Left cardiac atrium (tissue), 4 donors: ENCODE measurements at regions of chr10 and their contacts with region 1.

Region 1: DNA sequence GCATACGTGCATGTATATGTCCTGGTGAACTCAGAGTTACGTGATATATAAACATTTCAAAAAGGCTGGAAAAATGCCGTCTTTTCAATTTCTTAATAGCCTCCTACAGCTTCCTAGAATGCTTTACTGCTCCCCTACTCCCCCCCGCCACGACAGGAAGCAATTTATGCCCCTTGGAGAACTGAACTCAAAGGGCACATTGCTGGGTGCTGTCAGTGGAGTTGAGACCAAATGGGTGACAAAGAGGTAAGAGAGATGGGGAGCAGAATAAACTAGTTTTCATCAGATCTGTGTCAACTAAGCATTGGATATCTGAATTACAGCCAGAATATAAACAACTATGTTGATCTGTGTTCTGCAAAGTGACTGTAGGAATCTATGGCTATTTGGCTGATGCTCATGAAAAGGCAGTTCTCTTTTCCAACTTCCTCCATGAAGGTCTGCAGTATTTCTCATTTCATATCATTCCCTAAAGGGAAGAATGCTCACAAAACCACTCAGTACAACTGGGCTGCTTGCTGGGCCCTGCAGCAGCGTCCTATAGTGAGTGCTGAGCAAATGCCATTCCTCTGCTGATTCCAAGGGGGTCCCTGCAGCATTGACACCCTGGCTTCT is 171.3 kb upstream of the HPS1 start:
- DNase-seq: no peak
- ATAC-seq: no peak

Region 2: GRCh38 chr10:98649170-98649569 is 31.2 kb after region 1 on chr10:
- intact Hi-C with region 1: loop called in 1 of 2 experiments (anchors 1 kb)
- DNase-seq: no peak
- ATAC-seq: no peak